ENCODE measurements at regions of chr6 and their contacts with region 1.

Region 1: GRCh38 chr6:136031982-136032381 is 180.5 kb downstream of the PDE7B start:
- DNase-seq: peak; percentile 53
- H3K4me3 Mint-ChIP-seq: no peak overlapping the region
- H3K27ac Mint-ChIP-seq: no peak overlapping the region
- H3K4me1 Mint-ChIP-seq: no peaks in the 10 kb centered on the region
- H3K27me3 Mint-ChIP-seq: no peaks in the 10 kb centered on the region
- CTCF ChIP-seq: peak; percentile 14

Region 2: DNA sequence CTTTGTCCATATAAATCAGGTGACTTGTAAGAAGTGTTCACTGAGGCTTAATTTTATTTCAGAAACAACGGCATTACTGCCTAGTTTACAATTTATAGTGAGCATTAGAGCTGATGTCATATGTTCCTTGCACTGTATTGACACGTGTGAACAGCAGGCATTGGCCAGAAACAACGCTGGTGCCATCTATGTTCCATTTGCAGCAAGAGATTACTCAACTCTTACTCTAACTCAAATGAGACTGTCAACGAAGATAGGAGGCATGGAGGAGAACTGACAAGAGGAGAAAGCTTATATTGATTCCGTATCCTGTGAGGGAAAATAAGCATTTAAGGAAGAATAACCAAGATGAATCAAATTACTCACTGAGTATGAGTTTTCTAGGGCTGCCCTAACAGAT is 169.8 kb after region 1 on chr6:
- CTCF ChIA-PET with region 1: interaction called, 3 read pairs
- POLR2A ChIA-PET with region 1: no interaction called
- intact Hi-C with region 1: loop called (anchors 5 kb)
- DNase-seq: peak; percentile 7
- H3K4me3 Mint-ChIP-seq: no peak overlapping the region
- H3K27ac Mint-ChIP-seq: no peak overlapping the region
- H3K4me1 Mint-ChIP-seq: no peaks in the 10 kb centered on the region
- H3K27me3 Mint-ChIP-seq: no peaks in the 10 kb centered on the region
- CTCF ChIP-seq: peak; percentile 13

Region 3: DNA sequence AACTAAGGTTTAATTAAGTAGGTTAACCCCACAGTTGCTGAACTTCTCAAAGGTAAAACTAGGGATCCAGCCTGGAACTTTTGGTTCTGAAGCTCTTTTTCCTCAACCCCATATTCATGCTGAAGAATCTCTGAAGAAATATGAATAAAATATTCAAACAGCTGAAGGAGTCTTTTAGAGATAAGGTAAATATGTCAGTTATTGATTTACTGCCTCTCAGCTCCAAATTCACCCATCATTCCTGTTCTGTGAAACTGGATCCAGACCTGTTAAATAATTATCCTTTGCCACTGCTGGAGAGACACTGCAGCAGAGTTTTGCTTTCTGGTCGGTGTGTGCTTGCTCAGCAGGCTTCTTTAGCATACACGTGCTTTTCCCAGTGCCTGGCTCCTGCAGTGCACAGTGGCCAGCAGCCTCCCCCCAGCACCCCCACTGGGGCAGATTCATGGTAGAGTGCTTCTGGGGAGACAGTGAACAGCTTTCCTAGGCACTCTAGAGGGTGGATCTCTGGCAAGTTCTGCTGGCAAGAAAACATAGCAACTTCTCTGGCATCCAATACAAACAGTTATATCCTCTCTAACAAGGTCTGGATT is 319.6 kb after region 1 on chr6:
- CTCF ChIA-PET with region 1: no interaction called
- POLR2A ChIA-PET with region 1: no interaction called
- intact Hi-C with region 1: no loop called
- DNase-seq: no peak
- H3K4me3 Mint-ChIP-seq: no peak overlapping the region
- H3K27ac Mint-ChIP-seq: no peak overlapping the region
- H3K4me1 Mint-ChIP-seq: peaks cover 5% of the 10 kb centered on the region
- H3K27me3 Mint-ChIP-seq: no peaks in the 10 kb centered on the region
- CTCF ChIP-seq: no peak